ENCODE measurements at regions of chr17 and their contacts with region 1.

Region 1: DNA sequence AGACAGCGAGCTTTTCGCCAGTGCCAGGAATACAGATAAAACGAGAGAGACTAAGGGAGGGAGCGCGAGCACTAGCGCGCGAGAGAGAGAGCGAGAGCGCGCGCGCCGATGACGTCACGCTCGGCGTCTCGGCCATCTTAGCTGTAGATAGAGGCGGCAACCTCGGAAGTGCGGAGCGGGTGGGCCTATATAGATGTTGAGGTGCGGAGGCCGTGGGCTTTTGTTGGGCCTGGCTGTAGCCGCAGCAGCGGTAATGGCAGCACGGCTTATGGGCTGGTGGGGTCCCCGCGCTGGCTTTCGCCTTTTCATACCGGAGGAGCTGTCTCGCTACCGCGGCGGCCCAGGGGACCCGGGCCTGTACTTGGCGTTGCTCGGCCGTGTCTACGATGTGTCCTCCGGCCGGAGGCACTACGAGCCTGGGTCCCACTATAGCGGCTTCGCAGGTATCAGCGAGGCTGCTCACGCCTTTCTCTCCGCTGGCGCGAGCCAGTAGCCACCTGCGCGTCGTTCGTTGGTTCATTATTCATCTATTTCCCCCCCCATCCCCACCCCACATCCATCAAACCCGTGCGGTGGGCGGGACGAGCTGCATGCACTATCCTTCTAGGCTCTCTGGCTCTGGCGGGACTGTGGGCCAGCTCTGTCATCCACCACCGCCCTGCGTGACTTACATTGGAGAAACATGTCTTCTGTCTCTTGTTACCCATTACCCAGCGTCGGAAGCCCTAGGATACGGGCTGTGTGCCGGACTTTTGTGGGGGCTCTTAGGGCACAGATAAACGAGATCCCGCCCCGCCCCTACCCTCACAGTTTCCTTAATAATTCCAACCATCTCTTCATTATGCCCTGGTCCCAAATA is 795 bp downstream of the CYB5D2 start:
- DNase-seq: peak; percentile 97
- H3K4me3 Mint-ChIP-seq: peak overlapping the region; percentile 99
- H3K27ac Mint-ChIP-seq: peak overlapping the region; percentile 100
- H3K4me1 Mint-ChIP-seq: peaks cover 39% of the 10 kb centered on the region
- H3K27me3 Mint-ChIP-seq: no peaks in the 10 kb centered on the region

Region 2: DNA sequence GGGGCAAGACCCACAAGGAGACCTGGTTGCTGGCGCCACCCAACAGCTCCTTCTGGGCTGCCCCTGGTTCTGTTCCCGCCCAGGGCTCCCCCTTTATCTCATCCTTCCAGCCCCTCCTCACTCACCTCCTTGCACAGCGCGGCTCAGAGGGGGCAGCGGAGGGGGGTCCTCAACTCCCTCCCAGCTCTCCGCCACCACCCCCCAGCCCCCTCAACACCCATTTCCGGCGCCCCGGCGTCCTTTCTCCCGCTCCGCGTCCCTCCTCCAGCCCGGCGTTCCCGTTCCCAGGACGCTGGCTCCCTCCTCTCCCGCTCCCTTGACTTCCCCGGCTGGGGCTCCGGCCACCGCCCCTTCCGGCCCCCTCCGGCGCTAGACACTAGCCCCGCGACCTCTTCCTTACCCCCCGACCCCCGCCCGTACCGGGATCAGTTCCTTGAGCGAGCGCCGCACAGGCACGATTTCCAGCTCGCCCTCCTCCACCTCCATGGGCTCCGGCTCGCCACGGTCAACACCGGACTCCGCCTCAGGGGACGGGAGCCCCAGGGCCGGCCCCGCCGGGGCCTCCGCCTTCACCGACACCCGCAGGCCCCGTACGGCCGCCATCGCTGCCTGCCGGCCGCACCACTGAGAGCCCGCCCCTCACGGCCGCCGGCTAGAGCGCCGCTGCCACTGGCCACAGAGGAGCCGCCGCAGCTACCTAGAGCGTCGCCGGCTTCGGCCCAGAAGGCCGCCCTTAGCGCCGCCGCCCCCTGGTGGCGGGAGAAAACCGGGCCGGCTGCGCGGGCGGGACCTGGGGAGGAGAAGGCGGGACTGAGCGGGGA is 298.0 kb before region 1 on chr17 and contains the start of gene NCBP3:
- intact Hi-C with region 1: loop called (anchors 1 kb)
- DNase-seq: peak; percentile 98
- H3K4me3 Mint-ChIP-seq: peak within 1 kb of the TSS; percentile 97
- H3K27ac Mint-ChIP-seq: peak within 1 kb of the TSS; percentile 94
- H3K4me1 Mint-ChIP-seq: peaks cover 22% of the 10 kb centered on the region
- H3K27me3 Mint-ChIP-seq: peaks cover 17% of the 10 kb centered on the region
- total RNA-seq, gene NCBP3: 45.9 and 52.1 TPM in 2 replicates

Region 3: GRCh38 chr17:3893003-3893719 is 250.6 kb before region 1 on chr17 and contains the start of gene CAMKK1:
- intact Hi-C with region 1: loop called (anchors 1 kb)
- DNase-seq: peak; percentile 98
- H3K4me3 Mint-ChIP-seq: peak within 1 kb of the TSS; percentile 86
- H3K27ac Mint-ChIP-seq: peak within 1 kb of the TSS; percentile 84
- H3K4me1 Mint-ChIP-seq: peaks cover 24% of the 10 kb centered on the region
- H3K27me3 Mint-ChIP-seq: peaks cover 7% of the 10 kb centered on the region
- total RNA-seq, gene CAMKK1: 8.6 and 9.2 TPM in 2 replicates

Region 4: DNA sequence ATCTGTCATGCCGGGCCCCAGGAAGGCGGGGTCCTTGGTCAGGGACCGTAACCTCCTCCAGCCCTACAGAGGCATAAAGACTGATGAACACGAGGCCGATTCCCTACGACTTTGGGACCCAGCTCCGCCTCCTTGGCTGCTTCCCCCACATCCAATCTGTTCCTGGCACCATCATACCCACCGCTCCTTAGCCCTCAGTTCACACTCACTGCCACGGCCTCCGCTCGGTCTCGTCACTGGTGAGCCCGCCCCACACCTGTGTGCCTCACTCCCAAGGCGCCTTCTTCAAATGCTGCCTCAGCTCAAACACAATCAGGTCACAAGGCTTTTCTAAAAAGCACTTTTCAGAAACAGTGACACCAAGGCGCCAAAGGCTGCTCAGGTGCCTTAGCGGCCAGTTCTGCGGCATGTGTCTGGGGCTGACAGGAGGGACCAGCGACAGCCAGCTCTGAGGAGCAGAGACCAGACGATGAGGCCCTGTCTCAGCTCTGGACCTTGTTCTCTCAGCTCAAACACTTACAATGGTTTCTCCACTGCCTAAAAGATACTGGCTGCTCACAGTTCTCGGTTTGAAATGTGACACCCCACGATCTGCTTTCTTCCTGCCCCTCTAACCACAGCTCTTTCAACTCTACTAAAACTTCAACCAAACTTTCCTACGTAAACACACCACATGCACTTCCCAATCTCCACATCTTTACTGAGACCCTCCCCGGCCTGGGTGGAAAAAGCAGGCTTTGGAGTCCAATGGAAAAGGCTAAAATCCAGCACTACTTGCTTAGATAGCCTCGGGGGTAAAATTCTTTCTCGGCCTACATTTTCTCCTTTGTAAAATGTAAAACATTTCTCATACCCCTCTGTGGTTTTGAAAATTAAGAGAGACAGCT is 32.4 kb after region 1 on chr17:
- intact Hi-C with region 1: loop called (anchors 1 kb)
- DNase-seq: peak; percentile 85
- H3K4me3 Mint-ChIP-seq: peak overlapping the region; percentile 78
- H3K27ac Mint-ChIP-seq: peak overlapping the region; percentile 88
- H3K4me1 Mint-ChIP-seq: peaks cover 51% of the 10 kb centered on the region
- H3K27me3 Mint-ChIP-seq: no peaks in the 10 kb centered on the region

Region 5: DNA sequence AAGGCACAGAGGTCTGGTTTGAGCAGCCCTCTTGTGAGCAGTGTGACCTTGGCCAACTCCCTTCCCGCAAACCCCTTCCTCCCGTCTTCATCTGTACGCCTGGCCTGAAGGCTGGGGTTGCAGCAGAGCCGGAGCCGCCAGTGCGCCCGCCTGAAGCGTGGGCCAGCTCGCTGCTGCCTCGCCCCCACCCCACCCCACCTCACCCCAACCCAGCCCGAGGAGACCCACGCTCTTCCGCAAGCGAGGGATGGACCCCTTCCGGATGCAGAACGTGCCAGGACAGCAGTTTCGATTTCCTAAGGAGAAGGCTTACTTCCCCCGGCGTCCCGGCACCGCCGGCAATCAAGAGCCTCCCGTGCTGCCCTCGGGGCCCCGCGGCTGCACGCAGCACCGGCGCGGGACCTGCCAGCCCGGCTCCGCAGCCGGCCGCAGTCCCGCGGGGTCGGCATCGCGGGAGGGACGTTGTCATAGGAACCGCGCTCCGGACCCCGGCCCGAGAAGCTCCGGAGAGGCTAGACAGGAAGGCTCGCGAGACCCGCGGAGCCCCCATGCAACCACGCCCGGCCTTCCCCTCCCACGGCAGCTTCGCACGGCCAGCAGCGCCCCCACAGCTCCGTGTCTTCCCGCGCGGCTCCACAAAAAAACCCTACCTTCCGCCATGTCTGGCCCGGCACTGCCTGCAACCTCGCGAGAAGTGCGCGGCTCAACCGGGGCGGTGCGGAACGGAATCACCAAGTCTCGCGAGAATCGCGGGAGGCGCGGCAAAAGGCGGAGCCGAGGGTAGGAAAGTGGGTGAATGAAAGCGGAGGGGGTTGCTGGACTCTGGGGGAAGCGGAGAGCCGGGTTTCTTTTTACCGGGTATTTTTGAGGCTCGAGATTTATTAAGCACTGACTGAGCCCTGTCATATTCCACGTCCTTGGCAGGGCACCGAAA is 119.8 kb after region 1 on chr17 and contains the start of gene ANKFY1:
- intact Hi-C with region 1: loop called (anchors 1 kb)
- DNase-seq: peak; percentile 100
- H3K4me3 Mint-ChIP-seq: peak within 1 kb of the TSS; percentile 95
- H3K27ac Mint-ChIP-seq: peak within 1 kb of the TSS; percentile 95
- H3K4me1 Mint-ChIP-seq: peaks cover 31% of the 10 kb centered on the region
- H3K27me3 Mint-ChIP-seq: no peaks in the 10 kb centered on the region
- total RNA-seq, gene ANKFY1: 53.1 and 53.6 TPM in 2 replicates

Region 6: DNA sequence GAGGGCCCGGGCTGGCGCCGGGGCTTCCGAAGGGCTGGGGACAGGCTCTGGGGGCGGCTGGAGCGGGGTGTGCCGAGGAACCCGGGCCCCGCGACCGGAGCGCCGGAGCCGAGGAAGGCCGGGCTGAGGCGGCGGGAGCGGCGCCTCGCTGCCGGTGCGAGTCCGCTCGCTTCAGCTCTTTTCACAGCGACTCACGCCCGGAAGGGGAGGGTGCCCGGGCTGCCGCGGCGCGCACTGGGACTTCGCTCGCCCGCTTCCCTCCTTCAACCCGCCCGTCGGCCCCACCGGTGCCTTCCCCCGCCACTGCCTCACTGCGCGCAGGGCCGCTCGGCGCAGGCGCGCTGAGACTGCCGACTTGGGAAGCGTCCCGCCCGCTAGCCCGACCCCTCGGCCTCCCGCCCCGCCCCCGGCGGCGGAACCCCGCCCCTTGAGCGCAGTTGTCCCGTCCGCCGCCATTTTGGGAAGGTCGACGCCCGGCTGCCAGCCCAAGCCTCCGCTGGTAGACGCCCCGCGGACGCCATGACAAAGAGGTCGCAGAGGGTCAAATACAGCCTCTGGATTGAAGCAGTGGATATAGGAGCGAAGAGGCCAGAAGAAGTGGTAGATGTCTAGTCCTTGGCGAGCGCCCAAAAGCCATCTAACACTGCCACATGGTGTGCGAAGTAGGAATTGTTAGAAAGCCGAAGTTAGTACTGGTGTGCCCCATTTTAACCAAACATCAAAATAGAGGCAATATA is 222.7 kb after region 1 on chr17 and contains the start of gene UBE2G1:
- intact Hi-C with region 1: loop called (anchors 1 kb)
- DNase-seq: peak; percentile 99
- H3K4me3 Mint-ChIP-seq: peak within 1 kb of the TSS; percentile 77
- H3K27ac Mint-ChIP-seq: peak within 1 kb of the TSS; percentile 96
- H3K4me1 Mint-ChIP-seq: peaks cover 26% of the 10 kb centered on the region
- H3K27me3 Mint-ChIP-seq: no peaks in the 10 kb centered on the region
- total RNA-seq, gene UBE2G1: 74.8 and 77.3 TPM in 2 replicates

Region 7: DNA sequence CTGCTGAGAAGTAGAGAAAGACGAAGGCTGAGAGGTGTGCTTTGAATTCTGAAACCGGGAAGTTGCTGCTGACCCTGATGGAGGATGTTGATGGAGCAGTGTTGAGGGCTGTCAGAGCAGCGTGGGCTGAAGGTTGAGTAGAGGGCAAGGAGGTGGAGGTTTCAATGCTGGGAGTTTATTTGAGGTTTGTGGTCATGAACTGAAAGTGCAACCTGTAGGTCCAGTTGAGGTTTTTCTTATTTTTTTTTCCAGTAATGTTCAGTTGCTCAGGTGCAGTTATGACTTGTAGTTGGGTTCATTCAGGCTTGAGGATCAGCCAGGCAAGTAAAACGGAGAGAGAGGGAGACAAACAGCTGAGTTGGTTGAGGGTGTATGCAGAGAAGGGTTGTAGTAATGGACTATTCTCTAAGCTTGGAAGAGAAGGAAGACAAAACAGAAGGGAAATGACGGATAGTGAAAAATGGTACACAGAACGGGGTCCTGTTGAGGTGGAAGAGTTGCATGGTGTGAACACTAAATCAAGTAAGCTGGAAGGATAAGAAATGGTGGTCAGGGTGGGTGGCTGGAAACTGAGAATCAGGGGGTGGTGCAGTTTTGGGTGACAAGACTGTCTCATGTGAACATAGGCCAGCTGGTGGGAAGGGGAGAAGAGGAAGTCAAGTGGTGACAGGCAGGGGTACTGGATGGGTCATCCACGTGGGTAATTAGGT is 231.4 kb after region 1 on chr17:
- intact Hi-C with region 1: loop called (anchors 1 kb)
- DNase-seq: peak; percentile 88
- H3K4me3 Mint-ChIP-seq: peak overlapping the region; percentile 62
- H3K27ac Mint-ChIP-seq: peak overlapping the region; percentile 90
- H3K4me1 Mint-ChIP-seq: peaks cover 29% of the 10 kb centered on the region
- H3K27me3 Mint-ChIP-seq: no peaks in the 10 kb centered on the region